H1 (cell line): ENCODE measurements at regions of chr18 and their contacts with region 1.

Region 1: DNA sequence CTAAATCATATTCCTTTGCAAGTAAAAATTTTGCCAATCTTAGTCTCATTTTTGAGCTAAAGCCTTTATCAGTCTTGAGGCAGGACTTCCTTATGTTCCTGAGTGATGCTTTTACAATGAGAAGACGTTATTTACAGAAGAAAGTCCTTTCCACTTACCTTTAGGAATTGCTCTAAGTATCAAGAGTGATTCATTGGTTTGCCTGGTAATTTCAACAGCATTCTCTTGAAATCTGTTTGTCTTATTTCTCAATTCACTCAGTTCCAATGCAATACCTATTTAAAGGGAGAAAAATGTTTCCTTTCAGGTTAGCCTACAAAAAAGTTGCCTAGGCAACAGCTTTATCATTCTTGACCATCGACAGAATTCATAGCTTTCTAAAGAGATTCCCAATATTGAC is 137.2 kb downstream of the LAMA1 start:
- DNase-seq: no peak
- H3K4me3 ChIP-seq: no peak overlapping the region
- H3K27ac ChIP-seq: no peak overlapping the region
- H3K4me1 ChIP-seq: no peaks in the 10 kb centered on the region
- H3K27me3 ChIP-seq: no peaks in the 10 kb centered on the region
- CTCF ChIP-seq: no peak
- EP300 ChIP-seq: no peak
- POLR2A ChIP-seq: no peak
- RAD21 ChIP-seq: no peak

Region 2: GRCh38 chr18:7000484-7001096 is 20.2 kb after region 1 on chr18:
- CTCF ChIA-PET with region 1: interaction called, 15 read pairs
- POLR2A ChIA-PET with region 1: interaction called, 3 read pairs
- DNase-seq: no peak
- H3K4me3 ChIP-seq: no peak overlapping the region
- H3K27ac ChIP-seq: no peak overlapping the region
- H3K4me1 ChIP-seq: peaks cover 0 to 3% (median 0%) of the 10 kb centered on the region in 4 experiments; a peak in 4 of 7 replicates
- H3K27me3 ChIP-seq: no peaks in the 10 kb centered on the region
- CTCF ChIP-seq: peak in 2 of 3 experiments; percentile 48 to 64; a peak in 2 of 4 replicates
- EP300 ChIP-seq: no peak
- POLR2A ChIP-seq: no peak
- RAD21 ChIP-seq: peak; percentile 52 to 54